Activated T-helper 1 cell treated with anti-CD3 and anti-CD28 coated beads, Interleukin-12 subunit alpha, Interleukin-12 subunit beta, Interleukin-2, Interleukin-4 antibody, amounts not matched to agents 30 ng/mL and 10 ng/mL and 1 ng/mL, durations not matched to agents 14 hours and 24 hours and 36 hours (primary cell): ENCODE measurements at regions of chr5 and their contacts with region 1.

Region 1: GRCh38 chr5:142432369-142432863 is 107.6 kb upstream of the SPRY4 start:
- DNase-seq: peak; percentile 19
- H3K4me3 Mint-ChIP-seq: peak overlapping the region; percentile 66
- H3K27ac Mint-ChIP-seq: peak overlapping the region; percentile 90
- H3K4me1 Mint-ChIP-seq: peaks cover 36% of the 10 kb centered on the region
- H3K27me3 Mint-ChIP-seq: no peaks in the 10 kb centered on the region

Region 2: DNA sequence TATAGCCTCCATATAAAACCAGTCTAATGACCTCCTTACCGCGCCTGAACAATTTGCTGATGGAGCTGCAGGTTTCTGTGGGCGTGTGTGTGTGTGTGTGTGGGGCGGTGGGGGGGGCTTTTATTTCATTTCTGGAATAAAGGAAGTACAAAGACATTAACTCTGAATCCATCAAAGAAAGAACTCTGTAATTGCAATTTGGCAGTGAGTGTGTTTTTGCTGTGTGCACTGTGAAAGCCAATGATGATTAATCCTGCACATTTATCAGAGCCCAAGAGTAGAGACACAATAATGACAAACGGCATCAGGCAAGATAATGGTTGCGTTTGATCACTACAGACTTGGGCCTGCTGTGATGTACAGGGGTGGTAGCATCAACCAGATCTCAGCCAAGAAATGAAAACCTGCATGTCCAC is 353.1 kb before region 1 on chr5:
- intact Hi-C with region 1: no loop called
- DNase-seq: no peak
- H3K4me3 Mint-ChIP-seq: no peak overlapping the region
- H3K27ac Mint-ChIP-seq: no peak overlapping the region
- H3K4me1 Mint-ChIP-seq: peaks cover 21% of the 10 kb centered on the region
- H3K27me3 Mint-ChIP-seq: peaks cover 2% of the 10 kb centered on the region

Region 3: DNA sequence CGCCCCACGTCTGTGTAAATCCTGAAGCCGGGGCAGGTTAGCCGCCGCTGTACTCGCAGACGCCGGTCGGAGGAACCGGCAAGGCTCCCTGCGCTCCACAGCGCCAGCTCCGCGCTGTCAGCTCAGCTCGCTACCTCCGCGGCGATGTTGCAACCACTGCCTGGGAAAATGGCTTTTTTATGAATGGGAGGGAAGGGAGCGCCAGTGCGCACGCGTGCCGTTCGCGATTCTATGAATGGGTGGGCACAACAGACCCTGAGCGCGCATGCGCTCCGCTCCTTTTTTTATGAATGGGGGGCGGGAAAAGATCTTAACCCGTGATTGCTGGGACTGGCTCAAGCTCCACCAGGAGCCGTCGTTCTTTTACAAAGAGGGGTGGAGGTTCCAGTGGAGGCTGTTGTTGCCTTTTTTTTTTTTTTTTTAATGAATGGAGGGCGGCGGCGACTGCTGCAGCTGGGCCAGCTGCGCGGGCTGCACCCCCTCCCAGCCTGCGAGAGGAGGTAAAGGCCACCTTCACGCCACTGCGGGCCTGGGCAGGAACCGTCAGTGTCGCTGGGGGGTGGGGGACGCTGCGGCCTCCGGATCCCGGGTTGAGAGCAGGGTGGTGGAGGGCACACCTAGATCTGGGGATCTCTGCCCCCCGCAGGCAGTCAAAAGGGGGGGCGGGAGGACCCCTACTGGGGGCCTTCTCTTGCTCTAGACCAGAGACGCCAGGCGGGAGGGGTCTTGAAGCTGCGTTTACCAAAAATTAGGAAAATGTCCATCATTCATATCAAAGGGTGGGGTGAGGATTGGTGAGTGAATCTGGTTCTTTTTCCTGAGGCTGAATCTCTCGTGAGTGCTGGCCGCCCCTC is 107.3 kb before region 1 on chr5 and contains the start of gene SPRY4:
- intact Hi-C with region 1: loop called (anchors 5 kb)
- DNase-seq: peak; percentile 80
- H3K4me3 Mint-ChIP-seq: peak within 1 kb of the TSS; percentile 93
- H3K27ac Mint-ChIP-seq: peak within 1 kb of the TSS; percentile 81
- H3K4me1 Mint-ChIP-seq: peaks cover 42% of the 10 kb centered on the region
- H3K27me3 Mint-ChIP-seq: peaks cover 43% of the 10 kb centered on the region
- total RNA-seq, gene SPRY4: 1.7 and 2.4 TPM in 2 replicates

Region 4: DNA sequence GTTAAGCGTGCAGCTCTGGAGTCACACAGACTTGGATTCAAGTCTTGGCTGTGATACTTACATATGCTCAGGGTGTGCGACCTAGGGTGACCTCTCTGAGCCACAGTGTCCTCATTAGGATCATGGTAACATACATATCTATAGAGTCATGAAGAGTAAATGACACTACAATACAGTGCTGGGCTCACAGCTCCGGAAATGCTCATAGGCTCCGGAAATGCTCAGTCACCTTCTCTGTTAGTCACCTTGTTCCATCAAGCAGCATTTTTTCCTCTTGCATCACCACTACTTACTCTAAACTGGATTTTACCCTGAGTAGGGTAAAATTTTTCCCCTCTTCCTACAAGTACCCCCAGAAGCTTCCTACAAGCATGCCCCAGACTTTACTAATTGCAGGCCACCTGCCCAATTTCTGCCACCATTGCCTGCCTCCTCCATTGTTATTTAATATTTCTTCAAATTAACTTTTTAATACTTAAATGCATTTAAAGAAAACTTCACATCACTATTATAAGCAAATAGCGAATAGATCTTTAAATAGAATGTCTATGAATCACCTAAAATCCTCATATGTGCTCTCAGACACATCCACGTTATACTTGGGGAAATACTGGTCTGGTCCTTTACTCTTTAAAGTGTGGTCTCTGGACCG is 40.0 kb after region 1 on chr5:
- intact Hi-C with region 1: loop called (anchors 5 kb)
- DNase-seq: peak; percentile 17
- H3K4me3 Mint-ChIP-seq: no peak overlapping the region
- H3K27ac Mint-ChIP-seq: peak overlapping the region; percentile 81
- H3K4me1 Mint-ChIP-seq: peaks cover 15% of the 10 kb centered on the region
- H3K27me3 Mint-ChIP-seq: no peaks in the 10 kb centered on the region